Breast epithelium (tissue), 4 donors: ENCODE measurements at regions of chr3 and their contacts with region 1.

Region 1: GRCh38 chr3:3545360-3545759 is 253.9 kb upstream of the LRRN1 start:
- DNase-seq: no peak
- H3K4me3 ChIP-seq: no peak overlapping the region
- H3K27ac ChIP-seq: no peak overlapping the region
- H3K4me1 ChIP-seq: no peaks in the 10 kb centered on the region
- H3K27me3 ChIP-seq: no peaks in the 10 kb centered on the region
- CTCF ChIP-seq: no peak
- POLR2A ChIP-seq: no peak

Region 2: DNA sequence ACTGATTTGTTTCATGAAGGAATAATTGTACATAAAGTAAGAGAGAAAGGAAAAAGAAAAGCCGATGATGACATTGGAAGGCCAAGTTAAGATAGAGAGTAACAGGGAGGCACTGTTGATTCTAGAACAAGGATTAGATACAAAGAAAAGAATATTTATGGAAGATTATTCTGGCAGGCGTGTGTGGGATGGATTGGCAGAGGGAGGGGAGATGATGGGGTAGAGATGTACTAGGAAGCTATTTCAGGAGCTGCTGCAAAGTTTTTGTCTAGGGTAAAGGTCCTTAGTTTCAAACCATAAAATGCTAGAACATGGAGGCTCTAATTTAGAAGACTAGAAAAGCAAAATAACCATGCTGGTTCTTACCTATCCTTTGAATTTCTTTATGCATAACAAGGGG is 26.1 kb before region 1 on chr3:
- intact Hi-C with region 1: no loop called
- DNase-seq: no peak
- H3K4me3 ChIP-seq: no peak overlapping the region
- H3K27ac ChIP-seq: no peak overlapping the region
- H3K4me1 ChIP-seq: no peaks in the 10 kb centered on the region
- H3K27me3 ChIP-seq: no peaks in the 10 kb centered on the region
- CTCF ChIP-seq: no peak
- POLR2A ChIP-seq: no peak

Region 3: DNA sequence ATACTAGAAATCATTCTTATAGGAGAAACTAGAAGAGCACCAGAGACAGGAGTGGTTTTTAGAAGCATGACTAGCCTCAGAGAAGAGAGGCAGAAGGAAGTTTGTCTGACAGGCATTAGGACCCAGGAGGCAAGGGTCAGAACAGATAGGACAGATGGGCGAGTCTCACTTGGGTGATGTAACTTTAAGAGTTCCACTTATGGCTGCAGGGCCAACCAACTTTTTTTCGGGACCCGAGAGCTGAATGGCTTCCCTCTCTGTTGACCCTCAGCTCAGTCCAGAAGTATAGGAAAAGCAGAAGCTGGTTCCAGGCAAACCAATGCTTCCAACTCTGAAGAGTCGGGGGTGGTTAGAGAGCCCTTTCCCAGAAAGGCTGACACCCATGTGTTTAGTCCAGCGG is 621.2 kb after region 1 on chr3:
- intact Hi-C with region 1: loop called (anchors 5 kb)
- DNase-seq: no peak
- H3K4me3 ChIP-seq: no peak overlapping the region
- H3K27ac ChIP-seq: no peak overlapping the region
- H3K4me1 ChIP-seq: no peaks in the 10 kb centered on the region
- H3K27me3 ChIP-seq: no peaks in the 10 kb centered on the region
- CTCF ChIP-seq: no peak
- POLR2A ChIP-seq: no peak